Transverse colon (tissue), 4 donors: ENCODE measurements at regions of chr19 and their contacts with region 1.

Region 1: GRCh38 chr19:46384396-46384795 is 29.0 kb downstream of the CCDC8 start:
- DNase-seq: no peak
- H3K4me3 ChIP-seq: no peak overlapping the region
- H3K27ac ChIP-seq: no peak overlapping the region
- H3K4me1 ChIP-seq: no peaks in the 10 kb centered on the region
- H3K27me3 ChIP-seq: no peaks in the 10 kb centered on the region
- CTCF ChIP-seq: no peak
- EP300 ChIP-seq: no peak
- POLR2A ChIP-seq: no peak

Region 2: GRCh38 chr19:46288896-46289588 is 95.4 kb before region 1 on chr19:
- in situ Hi-C with region 1: loop called in 1 of 4 experiments (anchors 10 kb)
- intact Hi-C with region 1: no loop called
- DNase-seq: no peak
- H3K4me3 ChIP-seq: no peak overlapping the region
- H3K27ac ChIP-seq: peak overlapping the region in 3 of 4 donors; percentile 13 to 41 (median 16)
- H3K4me1 ChIP-seq: no peaks in the 10 kb centered on the region
- H3K27me3 ChIP-seq: no peaks in the 10 kb centered on the region
- CTCF ChIP-seq: no peak
- EP300 ChIP-seq: no peak
- POLR2A ChIP-seq: no peak